Activated CD8-positive, alpha-beta T cell treated with anti-CD3 and anti-CD28 coated beads for 36 hours (primary cell): ENCODE measurements at regions of chr1 and their contacts with region 1.

Region 1: GRCh38 chr1:153633716-153634665 is at the start of gene CHTOP:
- DNase-seq: peak; percentile 98
- ATAC-seq: peak; percentile 95
- H3K4me3 Mint-ChIP-seq: peak within 1 kb of the TSS; percentile 100
- H3K27ac Mint-ChIP-seq: peak within 1 kb of the TSS; percentile 99
- H3K4me1 Mint-ChIP-seq: peaks cover 45% of the 10 kb centered on the region
- H3K27me3 Mint-ChIP-seq: no peaks in the 10 kb centered on the region
- CTCF ChIP-seq: no peak
- total RNA-seq, gene CHTOP: 76.8 to 83.2 TPM

Region 2: DNA sequence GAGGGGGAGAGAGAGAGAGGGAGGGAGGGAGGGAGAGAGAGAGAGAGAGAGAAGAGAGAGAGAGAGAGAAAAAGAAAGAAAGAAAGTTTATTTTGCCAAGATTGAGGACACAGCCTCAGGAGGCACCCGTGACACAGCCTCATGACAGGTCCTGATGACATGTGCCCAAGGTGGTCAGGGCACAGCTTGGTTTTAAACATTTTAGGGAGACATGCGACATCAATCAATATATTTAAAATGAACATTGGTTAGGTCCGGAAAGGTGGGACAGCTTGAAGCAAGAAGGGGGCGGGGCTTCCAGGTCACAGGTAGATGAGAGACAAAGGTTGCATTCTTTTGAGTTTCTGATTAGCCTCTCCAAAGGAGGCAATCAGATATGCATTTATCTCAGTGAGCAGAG is 113.8 kb before region 1 on chr1:
- CTCF ChIA-PET with region 1: no interaction called
- POLR2A ChIA-PET with region 1: no interaction called
- intact Hi-C with region 1: no loop called
- DNase-seq: no peak
- ATAC-seq: no peak
- H3K4me3 Mint-ChIP-seq: no peak overlapping the region
- H3K27ac Mint-ChIP-seq: no peak overlapping the region
- H3K4me1 Mint-ChIP-seq: peaks cover 7% of the 10 kb centered on the region
- H3K27me3 Mint-ChIP-seq: no peaks in the 10 kb centered on the region
- CTCF ChIP-seq: no peak

Region 3: GRCh38 chr1:153556348-153556747 is 77.6 kb before region 1 on chr1:
- CTCF ChIA-PET with region 1: no interaction called
- POLR2A ChIA-PET with region 1: no interaction called
- intact Hi-C with region 1: no loop called
- DNase-seq: no peak
- ATAC-seq: no peak
- H3K4me3 Mint-ChIP-seq: no peak overlapping the region
- H3K27ac Mint-ChIP-seq: no peak overlapping the region
- H3K4me1 Mint-ChIP-seq: no peaks in the 10 kb centered on the region
- H3K27me3 Mint-ChIP-seq: no peaks in the 10 kb centered on the region
- CTCF ChIP-seq: no peak

Region 4: GRCh38 chr1:153617675-153618074 is 16.3 kb before region 1 on chr1:
- CTCF ChIA-PET with region 1: interaction called, 60 read pairs
- POLR2A ChIA-PET with region 1: interaction called, 5 read pairs
- intact Hi-C with region 1: no loop called
- DNase-seq: peak; percentile 87
- ATAC-seq: peak; percentile 96
- H3K4me3 Mint-ChIP-seq: no peak overlapping the region
- H3K27ac Mint-ChIP-seq: no peak overlapping the region
- H3K4me1 Mint-ChIP-seq: peaks cover 5% of the 10 kb centered on the region
- H3K27me3 Mint-ChIP-seq: no peaks in the 10 kb centered on the region
- CTCF ChIP-seq: peak; percentile 73

Region 5: DNA sequence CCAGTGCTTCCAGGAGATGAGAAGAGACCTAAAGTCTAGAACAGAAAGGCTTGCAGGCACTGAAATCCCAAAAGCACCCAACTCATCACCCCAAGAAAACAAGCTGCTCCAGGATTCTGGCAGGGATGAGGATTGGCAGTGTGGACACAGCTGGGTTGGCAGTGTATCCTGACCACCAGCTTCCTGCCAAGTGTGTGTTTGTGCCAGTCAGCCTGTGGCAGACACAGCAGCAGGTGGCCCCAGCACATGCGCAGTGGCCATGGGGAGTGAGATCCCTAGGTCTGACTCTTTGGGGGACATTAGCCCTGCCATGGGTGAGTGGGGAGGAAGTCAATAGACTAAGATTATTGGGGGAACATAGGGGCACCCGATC is 15.9 kb after region 1 on chr1:
- CTCF ChIA-PET with region 1: interaction called, 17 read pairs
- POLR2A ChIA-PET with region 1: interaction called, 72 read pairs
- intact Hi-C with region 1: no loop called
- DNase-seq: no peak
- ATAC-seq: peak; percentile 35
- H3K4me3 Mint-ChIP-seq: no peak overlapping the region
- H3K27ac Mint-ChIP-seq: peak overlapping the region; percentile 86
- H3K4me1 Mint-ChIP-seq: peaks cover 43% of the 10 kb centered on the region
- H3K27me3 Mint-ChIP-seq: no peaks in the 10 kb centered on the region
- CTCF ChIP-seq: no peak

Region 6: DNA sequence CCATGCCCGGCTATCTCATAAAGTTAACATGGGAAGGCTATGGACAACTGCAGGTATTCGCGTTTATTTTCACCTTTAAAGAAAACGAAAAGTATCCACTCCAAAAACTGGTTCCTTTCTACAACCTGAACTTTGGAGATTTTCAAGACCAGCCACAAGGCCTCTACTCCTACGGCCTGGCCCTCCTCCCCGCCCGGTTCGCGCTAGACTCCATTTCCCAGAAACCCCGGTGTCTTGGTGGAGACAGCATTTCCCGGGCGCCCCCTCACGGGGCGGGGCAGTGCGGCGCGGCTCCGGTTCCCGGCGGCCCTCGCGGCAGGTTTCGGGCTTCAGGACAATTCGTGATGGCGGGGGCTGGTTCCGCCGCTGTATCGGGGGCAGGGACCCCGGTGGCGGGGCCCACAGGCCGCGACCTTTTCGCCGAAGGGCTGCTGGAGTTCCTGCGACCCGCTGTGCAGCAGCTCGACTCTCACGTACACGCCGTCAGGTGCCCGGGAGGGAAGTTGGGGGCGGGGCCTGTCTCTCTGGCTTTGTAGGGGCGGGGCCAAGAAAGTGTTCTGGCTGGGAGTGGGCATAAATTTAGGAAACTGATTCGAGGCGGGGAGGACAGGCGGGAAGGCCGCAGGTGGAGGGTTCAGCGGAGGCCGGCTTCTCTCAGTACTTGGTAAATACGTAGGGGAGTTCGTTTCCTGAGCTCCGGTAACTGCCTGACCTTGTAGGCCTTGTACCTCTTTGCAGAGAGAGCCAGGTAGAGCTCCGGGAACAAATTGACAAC is 24.6 kb after region 1 on chr1 and contains the start of gene SNAPIN:
- CTCF ChIA-PET with region 1: interaction called, 7 read pairs
- POLR2A ChIA-PET with region 1: interaction called, 72 read pairs
- intact Hi-C with region 1: no loop called
- DNase-seq: peak; percentile 96
- ATAC-seq: peak; percentile 95
- H3K4me3 Mint-ChIP-seq: peak within 1 kb of the TSS; percentile 98
- H3K27ac Mint-ChIP-seq: peak within 1 kb of the TSS; percentile 96
- H3K4me1 Mint-ChIP-seq: peaks cover 12% of the 10 kb centered on the region
- H3K27me3 Mint-ChIP-seq: no peaks in the 10 kb centered on the region
- CTCF ChIP-seq: no peak
- total RNA-seq, gene SNAPIN: 25.7 to 27.3 TPM

Region 7: GRCh38 chr1:153670859-153671627 is 37.1 kb after region 1 on chr1 and contains the start of gene ILF2:
- CTCF ChIA-PET with region 1: interaction called, 3 read pairs
- POLR2A ChIA-PET with region 1: interaction called, 31 read pairs
- intact Hi-C with region 1: no loop called
- DNase-seq: peak; percentile 99
- ATAC-seq: peak; percentile 90
- H3K4me3 Mint-ChIP-seq: no peak within 1 kb of the TSS
- H3K27ac Mint-ChIP-seq: no peak within 1 kb of the TSS
- H3K4me1 Mint-ChIP-seq: peaks cover 26% of the 10 kb centered on the region
- H3K27me3 Mint-ChIP-seq: no peaks in the 10 kb centered on the region
- CTCF ChIP-seq: no peak
- total RNA-seq, gene ILF2: 328 to 333 TPM

Region 8: GRCh38 chr1:153698020-153698931 is 64.3 kb after region 1 on chr1:
- CTCF ChIA-PET with region 1: no interaction called
- POLR2A ChIA-PET with region 1: no interaction called
- intact Hi-C with region 1: no loop called
- DNase-seq: peak; percentile 7
- ATAC-seq: no peak
- H3K4me3 Mint-ChIP-seq: no peak overlapping the region
- H3K27ac Mint-ChIP-seq: no peak overlapping the region
- H3K4me1 Mint-ChIP-seq: no peaks in the 10 kb centered on the region
- H3K27me3 Mint-ChIP-seq: peaks cover 2% of the 10 kb centered on the region
- CTCF ChIP-seq: no peak